ENCODE measurements at regions of chr1 and their contacts with region 1.

Region 1: GRCh38 chr1:111507411-111508201 is 4.2 kb upstream of the ADORA3 start:
- DNase-seq: peak; percentile 77
- ATAC-seq: peak; percentile 67
- H3K4me3 Mint-ChIP-seq: peak overlapping the region; percentile 50
- H3K27ac Mint-ChIP-seq: peak overlapping the region; percentile 93
- H3K4me1 Mint-ChIP-seq: peaks cover 59% of the 10 kb centered on the region
- H3K27me3 Mint-ChIP-seq: no peaks in the 10 kb centered on the region

Region 2: GRCh38 chr1:111448918-111449702 is 58.5 kb before region 1 on chr1 and contains the starts of genes ATP5PB and WDR77:
- CTCF ChIA-PET with region 1: interaction called, 4 read pairs
- POLR2A ChIA-PET with region 1: interaction called, 4 read pairs
- intact Hi-C with region 1: loop called in 1 of 2 experiments (anchors 1 kb)
- DNase-seq: peak; percentile 94
- ATAC-seq: peak; percentile 98
- H3K4me3 Mint-ChIP-seq: peak within 1 kb of the TSS; percentile 99
- H3K27ac Mint-ChIP-seq: peak within 1 kb of the TSS; percentile 98
- H3K4me1 Mint-ChIP-seq: peaks cover 79% of the 10 kb centered on the region
- H3K27me3 Mint-ChIP-seq: no peaks in the 10 kb centered on the region
- total RNA-seq, gene ATP5PB: 292 to 301 TPM
- total RNA-seq, gene WDR77: 42.5 to 53.6 TPM

Region 3: GRCh38 chr1:111541721-111542120 is 34.1 kb after region 1 on chr1:
- CTCF ChIA-PET with region 1: interaction called, 10 read pairs
- POLR2A ChIA-PET with region 1: no interaction called
- intact Hi-C with region 1: no loop called
- DNase-seq: no peak
- ATAC-seq: no peak
- H3K4me3 Mint-ChIP-seq: no peak overlapping the region
- H3K27ac Mint-ChIP-seq: no peak overlapping the region
- H3K4me1 Mint-ChIP-seq: peaks cover 8% of the 10 kb centered on the region
- H3K27me3 Mint-ChIP-seq: no peaks in the 10 kb centered on the region

Region 4: GRCh38 chr1:111633736-111634247 is 126.2 kb after region 1 on chr1:
- CTCF ChIA-PET with region 1: interaction called, 49 read pairs
- POLR2A ChIA-PET with region 1: interaction called, 3 read pairs
- intact Hi-C with region 1: loop called in 1 of 2 experiments (anchors 2 kb)
- DNase-seq: no peak
- ATAC-seq: no peak
- H3K4me3 Mint-ChIP-seq: no peak overlapping the region
- H3K27ac Mint-ChIP-seq: no peak overlapping the region
- H3K4me1 Mint-ChIP-seq: peaks cover 84% of the 10 kb centered on the region
- H3K27me3 Mint-ChIP-seq: no peaks in the 10 kb centered on the region

Region 5: GRCh38 chr1:111699268-111699667 is 191.7 kb after region 1 on chr1:
- CTCF ChIA-PET with region 1: interaction called, 14 read pairs
- POLR2A ChIA-PET with region 1: no interaction called
- intact Hi-C with region 1: no loop called
- DNase-seq: no peak
- ATAC-seq: no peak
- H3K4me3 Mint-ChIP-seq: no peak overlapping the region
- H3K27ac Mint-ChIP-seq: peak overlapping the region; percentile 48
- H3K4me1 Mint-ChIP-seq: peaks cover 52% of the 10 kb centered on the region
- H3K27me3 Mint-ChIP-seq: no peaks in the 10 kb centered on the region

Region 6: DNA sequence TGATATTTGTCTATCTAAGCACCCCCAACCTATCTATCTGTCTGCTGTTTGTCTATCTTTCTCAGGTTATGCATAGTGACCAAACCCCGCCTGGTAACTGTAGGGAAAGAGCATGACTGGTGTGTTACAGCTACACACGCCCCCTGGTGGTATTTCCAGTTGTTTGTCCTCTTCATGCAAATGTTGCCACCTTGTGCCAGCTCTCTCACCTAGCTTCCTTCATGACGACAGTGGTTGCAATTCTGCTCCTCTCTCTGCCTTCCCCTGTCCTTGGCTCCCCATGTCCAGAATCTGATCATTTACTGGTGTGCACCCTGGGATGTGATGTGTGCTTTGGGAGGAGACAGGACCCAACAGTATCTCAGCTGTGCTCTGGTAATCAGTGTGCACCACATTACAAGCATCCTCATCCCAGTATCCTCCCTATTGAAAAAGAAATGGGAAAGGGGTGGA is 239.7 kb after region 1 on chr1:
- CTCF ChIA-PET with region 1: interaction called, 28 read pairs
- POLR2A ChIA-PET with region 1: interaction called, 3 read pairs
- intact Hi-C with region 1: loop called (anchors 1 to 2 kb)
- DNase-seq: peak; percentile 86
- ATAC-seq: peak; percentile 98
- H3K4me3 Mint-ChIP-seq: no peak overlapping the region
- H3K27ac Mint-ChIP-seq: no peak overlapping the region
- H3K4me1 Mint-ChIP-seq: peaks cover 2% of the 10 kb centered on the region
- H3K27me3 Mint-ChIP-seq: peaks cover 5% of the 10 kb centered on the region

Measured in activated CD4-positive, alpha-beta T cell treated with anti-CD3 and anti-CD28 coated beads for 36 hours (primary cell).